Mucosa of descending colon (tissue), 3 donors: ENCODE measurements at regions of chrX and their contacts with region 1.

Region 1: DNA sequence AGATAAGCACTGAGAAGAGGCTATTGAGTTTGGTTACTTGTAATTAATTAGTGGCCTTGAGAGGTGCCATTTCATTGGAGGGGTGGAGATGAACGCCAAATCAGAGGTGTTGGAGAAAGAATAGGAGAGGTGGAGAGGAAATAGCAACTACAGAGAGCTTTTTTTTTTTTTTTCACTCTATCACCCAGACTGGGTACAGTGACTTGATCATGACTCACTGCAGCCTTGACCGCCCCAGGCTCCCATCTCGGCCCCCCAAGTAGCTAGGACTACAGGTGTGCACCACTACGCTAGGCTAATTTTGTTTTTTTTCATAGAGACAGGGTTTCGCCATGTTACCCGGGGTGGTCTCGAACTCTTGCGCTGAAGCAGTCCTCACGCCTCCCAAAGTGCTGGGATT is 5.2 kb downstream of the NHS start:
- DNase-seq: no peak
- ATAC-seq: no peak
- H3K4me3 ChIP-seq: no peak overlapping the region
- H3K4me1 ChIP-seq: no peaks in the 10 kb centered on the region
- CTCF ChIP-seq: no peak

Region 2: GRCh38 chrX:17262123-17262522 is 118.1 kb before region 1 on chrX:
- intact Hi-C with region 1: no loop called
- DNase-seq: no peak
- ATAC-seq: no peak
- H3K4me3 ChIP-seq: no peak overlapping the region
- H3K4me1 ChIP-seq: no peaks in the 10 kb centered on the region
- CTCF ChIP-seq: no peak

Region 3: GRCh38 chrX:17527135-17527701 is 147.0 kb after region 1 on chrX:
- intact Hi-C with region 1: loop called in 1 of 2 experiments (anchors 5 kb)
- DNase-seq: peak in 1 of 3 donors; percentile 20
- ATAC-seq: peak; percentile 65
- H3K4me3 ChIP-seq: no peak overlapping the region
- H3K4me1 ChIP-seq: no peaks in the 10 kb centered on the region
- CTCF ChIP-seq: no peak